ENCODE measurements at regions of chr4 and their contacts with region 1.

Region 1: GRCh38 chr4:99665983-99666382 is 8.4 kb upstream of the C4orf54 start:
- DNase-seq: no peak
- H3K4me3 Mint-ChIP-seq: no peak overlapping the region
- H3K27ac Mint-ChIP-seq: no peak overlapping the region
- H3K4me1 Mint-ChIP-seq: no peaks in the 10 kb centered on the region
- H3K27me3 Mint-ChIP-seq: peaks cover 10% of the 10 kb centered on the region

Region 2: DNA sequence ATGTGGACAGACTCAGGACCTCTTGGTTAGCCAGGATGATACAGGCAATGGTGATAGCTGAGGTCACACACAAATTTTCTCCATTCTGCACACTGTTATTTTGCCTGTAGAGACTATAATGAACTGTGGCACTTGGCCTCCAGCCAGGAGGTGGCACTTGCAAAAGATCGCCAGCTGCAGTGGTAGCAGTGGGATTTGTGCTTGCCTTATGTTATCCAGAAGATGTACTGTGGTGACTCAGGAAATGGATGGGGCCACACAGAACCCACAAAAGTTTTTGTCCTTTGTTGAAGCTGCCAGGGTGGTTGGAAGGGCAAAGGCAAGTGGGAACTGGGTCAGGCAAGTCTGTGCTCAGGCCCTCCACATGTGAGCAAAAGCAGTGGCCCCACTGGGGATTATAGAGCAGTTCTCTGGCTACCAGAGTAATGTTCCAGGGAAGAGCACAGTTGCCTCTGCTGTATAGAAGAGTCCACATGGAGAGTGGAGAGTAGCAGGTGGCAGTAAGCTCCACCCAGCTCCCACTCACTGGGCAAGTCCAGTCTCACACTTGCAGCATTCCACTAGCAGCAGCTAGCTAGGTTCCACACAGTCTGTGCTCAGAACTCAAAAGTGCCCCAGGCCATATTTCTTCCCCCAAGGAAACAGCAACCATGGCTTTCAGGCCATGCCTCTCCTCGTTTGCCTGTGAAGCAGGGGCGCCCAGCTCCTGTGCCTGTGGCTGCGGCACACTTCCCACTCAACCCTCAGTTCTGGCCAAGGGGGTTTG is 161.0 kb before region 1 on chr4:
- CTCF ChIA-PET with region 1: no interaction called
- POLR2A ChIA-PET with region 1: no interaction called
- intact Hi-C with region 1: no loop called
- DNase-seq: no peak
- H3K4me3 Mint-ChIP-seq: no peak overlapping the region
- H3K27ac Mint-ChIP-seq: no peak overlapping the region
- H3K4me1 Mint-ChIP-seq: peaks cover 46% of the 10 kb centered on the region
- H3K27me3 Mint-ChIP-seq: no peaks in the 10 kb centered on the region

Region 3: GRCh38 chr4:99642725-99643489 is 23.1 kb before region 1 on chr4:
- CTCF ChIA-PET with region 1: no interaction called
- POLR2A ChIA-PET with region 1: no interaction called
- intact Hi-C with region 1: no loop called
- DNase-seq: no peak
- H3K4me3 Mint-ChIP-seq: no peak overlapping the region
- H3K27ac Mint-ChIP-seq: no peak overlapping the region
- H3K4me1 Mint-ChIP-seq: no peaks in the 10 kb centered on the region
- H3K27me3 Mint-ChIP-seq: peaks cover 5% of the 10 kb centered on the region

Region 4: GRCh38 chr4:99655308-99656081 is 10.5 kb before region 1 on chr4:
- CTCF ChIA-PET with region 1: no interaction called
- POLR2A ChIA-PET with region 1: no interaction called
- intact Hi-C with region 1: no loop called
- DNase-seq: no peak
- H3K4me3 Mint-ChIP-seq: no peak overlapping the region
- H3K27ac Mint-ChIP-seq: no peak overlapping the region
- H3K4me1 Mint-ChIP-seq: no peaks in the 10 kb centered on the region
- H3K27me3 Mint-ChIP-seq: no peaks in the 10 kb centered on the region

Region 5: GRCh38 chr4:99693140-99693539 is 27.2 kb after region 1 on chr4:
- CTCF ChIA-PET with region 1: no interaction called
- POLR2A ChIA-PET with region 1: no interaction called
- intact Hi-C with region 1: loop called (anchors 1 kb)
- DNase-seq: no peak
- H3K4me3 Mint-ChIP-seq: no peak overlapping the region
- H3K27ac Mint-ChIP-seq: no peak overlapping the region
- H3K4me1 Mint-ChIP-seq: no peaks in the 10 kb centered on the region
- H3K27me3 Mint-ChIP-seq: peaks cover 13% of the 10 kb centered on the region

Region 6: DNA sequence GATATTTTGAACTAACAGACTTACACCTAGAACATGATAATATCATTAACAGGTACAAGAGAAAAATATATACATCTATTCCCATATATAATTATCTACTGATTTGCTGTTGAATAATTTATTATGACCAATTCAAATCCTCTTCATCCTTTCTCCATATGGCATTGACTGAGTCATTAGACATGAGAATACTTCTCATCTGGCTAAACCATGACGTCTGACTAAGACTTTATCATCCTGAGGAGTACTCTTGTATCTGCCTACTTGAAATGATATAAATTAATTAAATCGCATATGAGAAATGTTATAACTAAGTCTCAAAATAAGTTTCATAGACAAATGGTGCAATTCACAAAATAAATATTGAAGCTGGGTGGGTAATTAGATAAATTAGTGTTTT is 784.5 kb after region 1 on chr4:
- CTCF ChIA-PET with region 1: no interaction called
- POLR2A ChIA-PET with region 1: no interaction called
- intact Hi-C with region 1: no loop called
- DNase-seq: no peak
- H3K4me3 Mint-ChIP-seq: no peak overlapping the region
- H3K27ac Mint-ChIP-seq: no peak overlapping the region
- H3K4me1 Mint-ChIP-seq: no peaks in the 10 kb centered on the region
- H3K27me3 Mint-ChIP-seq: peaks cover 8% of the 10 kb centered on the region

Measured in activated CD4-positive, alpha-beta memory T cell treated with anti-CD3 and anti-CD28 coated beads for 36 hours (primary cell).